Right cardiac atrium (tissue), 5 donors: ENCODE measurements at regions of chr11 and their contacts with region 1.

Region 1: DNA sequence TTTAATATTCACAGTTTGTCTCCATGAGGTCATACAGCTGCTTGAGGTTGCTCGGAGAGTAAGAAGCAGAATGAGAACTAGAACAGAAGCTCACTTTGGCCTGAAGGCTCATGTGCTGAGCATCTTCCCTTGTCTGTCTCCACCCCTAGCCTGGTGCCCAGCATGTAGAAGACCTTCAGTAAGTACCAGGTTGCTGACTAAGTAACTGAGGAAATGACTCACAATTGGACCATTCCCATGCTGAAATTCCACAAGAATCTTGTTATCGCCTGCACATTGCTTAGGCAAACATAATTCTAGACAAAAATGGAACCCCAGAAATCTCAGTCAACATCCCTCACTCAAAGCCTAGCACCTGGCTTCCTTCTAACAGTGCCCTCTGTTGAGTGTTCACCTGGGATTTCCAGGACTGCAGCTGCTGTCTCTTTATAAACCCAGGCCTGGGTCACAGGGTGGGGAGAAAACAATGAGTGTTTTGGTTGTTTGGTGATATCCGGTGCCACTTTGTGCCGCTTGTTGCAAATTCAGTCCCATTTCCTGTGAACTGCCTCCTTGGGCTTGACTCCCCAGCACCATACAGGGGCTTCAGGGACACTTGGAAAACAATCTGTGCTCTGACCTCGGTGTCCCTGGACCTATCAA is 406.8 kb downstream of the ETS1 start:
- DNase-seq: no peak
- ATAC-seq: peak in 1 of 2 donors; percentile 78
- H3K4me3 ChIP-seq: no peak overlapping the region
- H3K27ac ChIP-seq: no peak overlapping the region
- H3K4me1 ChIP-seq: peaks cover 2% of the 10 kb centered on the region
- H3K27me3 ChIP-seq: no peaks in the 10 kb centered on the region

Region 2: GRCh38 chr11:128086794-128087193 is 93.8 kb before region 1 on chr11:
- intact Hi-C with region 1: no loop called
- DNase-seq: no peak
- ATAC-seq: no peak
- H3K4me3 ChIP-seq: no peak overlapping the region
- H3K27ac ChIP-seq: no peak overlapping the region
- H3K4me1 ChIP-seq: no peaks in the 10 kb centered on the region
- H3K27me3 ChIP-seq: no peaks in the 10 kb centered on the region

Region 3: DNA sequence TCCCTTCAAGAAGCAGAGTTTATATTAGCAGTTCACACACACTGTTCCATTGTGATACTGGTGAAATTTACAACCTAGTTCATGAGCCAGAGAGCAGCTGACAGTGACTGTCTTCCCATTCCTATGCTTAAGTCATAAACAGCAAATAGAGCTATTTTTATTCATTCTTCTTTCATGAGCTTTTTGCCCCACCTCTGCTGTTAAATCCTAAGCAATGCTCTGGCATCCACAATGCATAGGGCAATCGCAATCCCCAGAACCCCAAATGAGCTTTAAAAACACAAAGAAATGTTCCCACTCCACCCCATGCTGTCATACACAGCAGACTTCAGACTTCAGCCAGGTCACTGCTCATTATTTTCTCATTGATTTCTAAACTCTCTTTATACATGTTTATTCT is 99.3 kb after region 1 on chr11:
- intact Hi-C with region 1: loop called in 1 of 4 experiments (anchors 10 kb)
- DNase-seq: no peak
- ATAC-seq: no peak
- H3K4me3 ChIP-seq: no peak overlapping the region
- H3K27ac ChIP-seq: no peak overlapping the region
- H3K4me1 ChIP-seq: no peaks in the 10 kb centered on the region
- H3K27me3 ChIP-seq: no peaks in the 10 kb centered on the region